ENCODE measurements at regions of chr2 and their contacts with region 1.

Region 1: DNA sequence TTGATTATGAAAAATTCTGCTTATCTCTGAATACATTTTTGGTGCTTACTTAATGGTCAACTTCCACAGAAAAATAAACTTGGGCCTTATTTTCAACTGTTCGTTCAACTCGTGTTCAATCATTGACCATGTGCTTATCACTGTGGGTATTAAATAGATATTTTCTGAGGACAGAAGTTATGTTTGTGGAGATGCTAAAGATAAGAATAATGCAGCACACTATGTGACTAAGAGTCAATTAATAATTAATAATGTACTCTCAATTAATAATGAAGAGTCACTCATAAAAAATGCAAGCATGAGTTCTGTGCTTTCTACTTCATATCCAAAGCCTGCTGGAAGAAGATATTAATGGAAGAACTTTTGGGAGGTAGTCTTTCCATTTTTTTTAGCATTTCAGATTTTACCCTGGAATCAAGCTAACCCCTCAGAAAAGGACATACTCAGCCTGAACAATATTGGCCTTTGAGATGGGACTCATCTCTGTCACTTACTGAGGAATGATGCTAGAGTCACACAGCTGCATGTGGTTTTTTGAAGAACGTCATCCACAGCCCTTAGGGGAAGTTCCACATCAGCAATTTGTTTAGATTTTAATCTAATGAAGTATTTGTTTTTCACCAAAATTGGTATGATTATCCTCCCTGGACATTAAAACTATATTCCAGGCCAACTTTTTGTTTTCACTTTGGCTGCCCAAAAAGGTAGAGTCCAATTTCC is 191.9 kb upstream of the CRIM1 start:
- DNase-seq: no peak
- H3K4me3 Mint-ChIP-seq: no peak overlapping the region
- H3K27ac Mint-ChIP-seq: no peak overlapping the region
- H3K4me1 Mint-ChIP-seq: peaks cover 15% of the 10 kb centered on the region
- H3K27me3 Mint-ChIP-seq: no peaks in the 10 kb centered on the region
- CTCF ChIP-seq: no peak

Region 2: GRCh38 chr2:36178384-36178783 is 14.7 kb after region 1 on chr2:
- CTCF ChIA-PET with region 1: no interaction called
- intact Hi-C with region 1: loop called (anchors 2 kb)
- DNase-seq: no peak
- H3K4me3 Mint-ChIP-seq: no peak overlapping the region
- H3K27ac Mint-ChIP-seq: no peak overlapping the region
- H3K4me1 Mint-ChIP-seq: peaks cover 33% of the 10 kb centered on the region
- H3K27me3 Mint-ChIP-seq: no peaks in the 10 kb centered on the region
- CTCF ChIP-seq: no peak

Measured in Calu3 (cell line).